ENCODE measurements at regions of chr6 and their contacts with region 1.

Region 1: GRCh38 chr6:37698261-37699137 is 816 bp upstream of the MDGA1 start:
- DNase-seq: peak in 31 of 35 experiments; percentile 13 to 83 (median 52)
- ATAC-seq: peak; percentile 32 to 57 (median 44)
- H3K4me3 ChIP-seq: peak overlapping the region; percentile 62 to 83
- H3K4me3 Mint-ChIP-seq: peak overlapping the region; percentile 90 to 97 (median 94)
- H3K27ac ChIP-seq: peak overlapping the region; percentile 43
- H3K27ac Mint-ChIP-seq: peak overlapping the region; percentile 96 to 98
- H3K4me1 ChIP-seq: peaks cover 2 to 37% of the 10 kb centered on the region in 2 experiments
- H3K4me1 Mint-ChIP-seq: peaks cover 32 to 41% (median 34%) of the 10 kb centered on the region in 3 donors
- H3K27me3 ChIP-seq: peaks cover 5 to 47% of the 10 kb centered on the region in 2 experiments
- H3K27me3 Mint-ChIP-seq: peaks cover 0 to 33% of the 10 kb centered on the region in 2 donors

Region 2: DNA sequence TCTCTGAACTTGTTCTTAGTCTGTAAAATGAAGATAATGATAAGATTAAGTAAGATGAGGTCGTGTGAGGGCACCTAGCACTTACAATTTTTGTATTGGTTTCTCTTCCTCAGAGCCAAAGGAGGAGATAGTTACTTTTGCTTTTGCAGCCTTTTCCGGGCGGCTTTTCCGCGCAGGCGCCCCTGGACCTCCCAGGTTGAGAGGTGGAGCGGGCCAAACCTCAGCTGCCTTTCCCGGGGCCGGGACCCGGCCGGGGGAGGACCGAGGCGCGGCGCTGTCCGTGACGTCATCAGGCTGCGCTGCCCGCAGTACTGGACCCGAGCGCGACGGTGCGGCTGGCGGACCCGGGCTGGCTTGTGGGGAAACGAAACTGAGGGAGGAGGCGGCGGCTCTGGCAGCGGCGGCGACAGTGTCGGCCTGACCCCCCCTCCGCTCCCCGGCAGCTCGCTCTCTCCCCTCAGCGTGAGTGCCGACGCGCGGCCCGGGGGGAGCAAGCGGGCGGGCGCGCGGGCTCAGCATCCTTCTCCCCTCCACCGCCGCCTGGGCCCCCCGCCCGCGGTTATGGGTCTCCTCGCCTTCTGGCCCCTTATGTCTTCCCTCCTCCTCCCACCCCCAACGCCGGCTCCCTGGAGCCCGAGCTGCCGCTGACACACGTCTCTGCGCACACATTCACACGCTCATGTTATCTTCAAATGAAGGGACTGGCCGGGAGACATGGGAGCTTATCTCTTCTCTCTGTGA is 265.4 kb before region 1 on chr6 and contains the start of gene CMTR1:
- CTCF ChIA-PET with region 1: interaction called in 1 of 2 experiments, 11 read pairs
- POLR2A ChIA-PET with region 1: no interaction called
- DNase-seq: peak; percentile 87 to 98 (median 94)
- ATAC-seq: peak; percentile 89 to 93 (median 92)
- H3K4me3 ChIP-seq: peak within 1 kb of the TSS; percentile 66 to 81
- H3K4me3 Mint-ChIP-seq: peak within 1 kb of the TSS; percentile 92 to 93 (median 93)
- H3K27ac ChIP-seq: peak within 1 kb of the TSS; percentile 86
- H3K27ac Mint-ChIP-seq: peak within 1 kb of the TSS; percentile 95 to 96
- H3K4me1 ChIP-seq: peaks cover 7 to 25% of the 10 kb centered on the region in 2 experiments
- H3K4me1 Mint-ChIP-seq: peaks cover 45 to 52% (median 49%) of the 10 kb centered on the region in 3 donors
- H3K27me3 ChIP-seq: no peaks in the 10 kb centered on the region
- H3K27me3 Mint-ChIP-seq: peaks cover 3 to 6% of the 10 kb centered on the region in 2 donors
- total RNA-seq, gene CMTR1: 62.5 to 82.7 (median 75.2) TPM

Region 3: DNA sequence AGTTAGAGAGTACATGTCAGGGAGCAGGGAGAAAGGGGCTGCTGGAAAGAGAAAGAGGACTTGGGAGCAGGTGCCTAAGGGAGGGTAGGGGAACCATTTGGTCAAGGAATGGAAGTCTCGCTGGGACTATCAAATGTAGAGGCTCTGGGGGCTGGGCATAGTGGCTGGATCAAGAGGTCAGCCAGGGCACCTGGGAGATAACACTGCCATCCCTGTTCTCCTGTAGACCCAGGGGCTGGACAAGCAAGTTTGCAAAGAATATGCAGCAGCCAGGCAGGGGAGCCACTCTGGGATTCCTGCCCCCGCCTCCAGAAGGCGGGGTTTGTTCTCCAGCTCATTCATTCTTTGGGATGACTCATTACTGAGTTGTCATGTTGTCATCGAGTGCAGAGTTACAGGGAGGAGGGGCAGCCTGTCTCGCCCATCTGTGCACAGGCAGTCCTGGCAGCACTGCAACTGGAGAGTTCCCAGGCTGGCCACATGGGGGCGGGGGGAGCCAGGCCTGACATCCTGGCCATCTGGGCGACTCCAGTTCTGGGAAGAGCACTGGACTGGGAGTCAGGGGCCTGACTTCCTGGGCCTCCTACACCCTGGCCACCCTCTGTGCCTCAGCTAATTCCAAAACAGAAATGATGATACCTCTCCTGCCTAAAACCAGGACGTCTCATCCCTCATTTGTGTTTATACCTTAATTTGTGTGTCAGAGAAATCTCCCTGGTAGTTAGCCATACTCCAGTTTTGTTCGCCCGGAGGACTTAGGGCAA is 92.8 kb after region 1 on chr6:
- CTCF ChIA-PET with region 1: no interaction called
- POLR2A ChIA-PET with region 1: interaction called in 1 of 2 experiments, 11 read pairs
- DNase-seq: peak; percentile 41 to 80 (median 64)
- ATAC-seq: peak; percentile 98 to 100 (median 100)
- H3K4me3 ChIP-seq: no peak overlapping the region
- H3K4me3 Mint-ChIP-seq: no peak overlapping the region
- H3K27ac ChIP-seq: no peak overlapping the region
- H3K27ac Mint-ChIP-seq: peak overlapping the region in 1 of 2 donors; percentile 47
- H3K4me1 ChIP-seq: peaks cover 0 to 7% of the 10 kb centered on the region in 2 experiments
- H3K4me1 Mint-ChIP-seq: peaks cover 0 to 9% (median 8%) of the 10 kb centered on the region in 3 donors
- H3K27me3 ChIP-seq: no peaks in the 10 kb centered on the region
- H3K27me3 Mint-ChIP-seq: no peaks in the 10 kb centered on the region

Region 4: GRCh38 chr6:38012573-38012972 is 314.1 kb after region 1 on chr6:
- CTCF ChIA-PET with region 1: interaction called in 1 of 2 experiments, 10 read pairs
- POLR2A ChIA-PET with region 1: no interaction called
- DNase-seq: peak in 11 of 35 experiments; percentile 1 to 48 (median 4)
- ATAC-seq: peak in 1 of 4 experiments; percentile 35
- H3K4me3 ChIP-seq: no peak overlapping the region
- H3K4me3 Mint-ChIP-seq: no peak overlapping the region
- H3K27ac ChIP-seq: no peak overlapping the region
- H3K27ac Mint-ChIP-seq: no peak overlapping the region
- H3K4me1 ChIP-seq: no peaks in the 10 kb centered on the region
- H3K4me1 Mint-ChIP-seq: peaks cover 34 to 47% (median 43%) of the 10 kb centered on the region in 3 donors
- H3K27me3 ChIP-seq: no peaks in the 10 kb centered on the region
- H3K27me3 Mint-ChIP-seq: no peaks in the 10 kb centered on the region

Measured in T-cell (primary cell).